ENCODE measurements at regions of chr10 and their contacts with region 1.

Region 1: DNA sequence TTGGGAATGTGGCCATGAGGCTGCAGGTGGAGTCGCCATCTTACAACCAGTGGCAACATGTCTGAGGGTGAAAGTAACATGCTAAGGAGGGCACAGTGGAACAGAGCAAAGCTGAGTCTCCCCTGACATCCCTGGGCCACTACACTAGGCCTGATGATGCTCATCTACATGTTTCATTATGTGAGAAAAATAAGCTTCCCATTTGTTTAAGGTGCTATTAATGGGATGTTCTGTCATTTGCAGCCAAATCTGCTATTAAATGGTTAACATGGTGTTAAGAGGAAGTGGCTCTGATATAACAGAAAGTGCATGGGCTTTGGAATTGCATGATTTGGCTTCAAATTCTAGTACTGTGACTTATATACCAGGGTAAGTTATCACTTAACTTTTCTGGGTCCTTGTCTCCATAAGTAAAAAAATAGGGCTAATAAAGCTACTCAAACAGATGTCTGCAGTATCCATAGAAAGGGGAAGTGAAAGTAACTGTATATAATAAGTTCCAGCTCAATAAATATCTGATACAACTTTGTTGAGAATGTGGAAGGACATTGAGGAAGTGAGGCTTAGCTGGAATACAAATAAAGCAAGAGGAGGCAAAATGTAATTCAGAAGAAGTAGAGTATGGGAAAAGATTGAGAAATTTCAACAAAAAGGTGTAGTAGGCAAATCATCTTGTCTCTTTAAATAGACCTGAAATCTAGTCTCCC is 158.9 kb downstream of the RTKN2 start:
- DNase-seq: peak in 3 of 14 experiments; percentile 13 to 23 (median 22)
- ATAC-seq: no peak
- H3K4me3 ChIP-seq: no peak overlapping the region
- H3K4me3 Mint-ChIP-seq: peak overlapping the region; percentile 39
- H3K27ac ChIP-seq: no peak overlapping the region
- H3K27ac Mint-ChIP-seq: peak overlapping the region; percentile 1
- H3K4me1 ChIP-seq: peaks cover 20% of the 10 kb centered on the region
- H3K4me1 Mint-ChIP-seq: peaks cover 34% of the 10 kb centered on the region
- H3K27me3 ChIP-seq: no peaks in the 10 kb centered on the region
- H3K27me3 Mint-ChIP-seq: no peaks in the 10 kb centered on the region
- CTCF ChIP-seq: no peak

Region 2: DNA sequence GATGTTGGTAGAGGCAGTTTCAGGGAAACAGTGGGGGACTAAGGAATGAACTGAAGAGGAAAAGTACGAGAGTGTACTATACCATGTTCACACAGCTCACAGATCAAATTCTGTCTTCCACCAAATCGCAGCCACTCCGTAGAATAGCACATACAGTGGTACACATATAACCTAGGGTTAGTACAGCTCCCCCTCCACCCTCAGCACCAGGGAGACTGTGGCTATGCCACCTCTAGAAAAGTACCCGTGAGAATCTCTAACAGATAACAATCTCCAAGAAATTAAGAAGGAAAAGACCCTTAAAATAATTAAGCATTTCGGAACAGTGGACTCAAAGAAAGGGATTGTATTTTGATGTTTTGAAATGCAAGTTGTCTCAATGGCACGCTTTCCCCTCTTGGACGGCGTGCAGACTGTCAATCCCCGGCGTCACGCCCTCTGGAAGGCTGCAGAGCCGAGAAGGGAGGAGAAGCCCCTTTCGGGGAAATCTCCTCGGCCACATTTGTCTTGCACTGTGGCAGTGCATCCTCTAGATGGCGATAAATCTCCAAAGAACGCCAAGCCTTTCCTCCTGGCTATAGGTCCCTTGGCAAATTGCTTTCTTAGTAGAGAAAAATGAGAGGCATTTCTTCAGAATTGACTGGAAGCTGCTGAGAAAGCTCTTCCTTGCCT is 1756.5 kb after region 1 on chr10:
- CTCF ChIA-PET with region 1: no interaction called
- POLR2A ChIA-PET with region 1: no interaction called
- intact Hi-C with region 1: loop called in 1 of 2 experiments (anchors 10 kb)
- DNase-seq: peak in 12 of 14 experiments; percentile 1 to 53 (median 20)
- ATAC-seq: peak; percentile 74
- H3K4me3 ChIP-seq: no peak overlapping the region
- H3K4me3 Mint-ChIP-seq: no peak overlapping the region
- H3K27ac ChIP-seq: no peak overlapping the region
- H3K27ac Mint-ChIP-seq: no peak overlapping the region
- H3K4me1 ChIP-seq: peaks cover 8% of the 10 kb centered on the region
- H3K4me1 Mint-ChIP-seq: peaks cover 13% of the 10 kb centered on the region
- H3K27me3 ChIP-seq: peaks cover 19 to 37% of the 10 kb centered on the region in 2 experiments
- H3K27me3 Mint-ChIP-seq: peaks cover 69% of the 10 kb centered on the region
- CTCF ChIP-seq: peak; percentile 83

Measured in CD4-positive, alpha-beta T cell (primary cell).